Mammary epithelial cell (primary cell): ENCODE measurements at regions of chr4 and their contacts with region 1.

Region 1: GRCh38 chr4:47836641-47837093 is 1.2 kb downstream of the CORIN start:
- DNase-seq: peak; percentile 78
- H3K4me3 ChIP-seq: peak overlapping the region; percentile 48 to 58 (median 55)
- H3K27ac ChIP-seq: no peak overlapping the region
- H3K4me1 ChIP-seq: peaks cover 19% of the 10 kb centered on the region
- H3K27me3 ChIP-seq: no peaks in the 10 kb centered on the region
- CTCF ChIP-seq: peak; percentile 67 to 88

Region 2: GRCh38 chr4:47668810-47669408 is 167.8 kb before region 1 on chr4:
- CTCF ChIA-PET with region 1: interaction called, 6 read pairs
- dilution Hi-C with region 1: no loop called
- in situ Hi-C with region 1: no loop called
- intact Hi-C with region 1: loop called (anchors 1 kb)
- DNase-seq: peak; percentile 38
- H3K4me3 ChIP-seq: no peak overlapping the region
- H3K27ac ChIP-seq: no peak overlapping the region
- H3K4me1 ChIP-seq: no peaks in the 10 kb centered on the region
- H3K27me3 ChIP-seq: peaks cover under 1% of the 10 kb centered on the region
- CTCF ChIP-seq: peak; percentile 69 to 74

Region 3: DNA sequence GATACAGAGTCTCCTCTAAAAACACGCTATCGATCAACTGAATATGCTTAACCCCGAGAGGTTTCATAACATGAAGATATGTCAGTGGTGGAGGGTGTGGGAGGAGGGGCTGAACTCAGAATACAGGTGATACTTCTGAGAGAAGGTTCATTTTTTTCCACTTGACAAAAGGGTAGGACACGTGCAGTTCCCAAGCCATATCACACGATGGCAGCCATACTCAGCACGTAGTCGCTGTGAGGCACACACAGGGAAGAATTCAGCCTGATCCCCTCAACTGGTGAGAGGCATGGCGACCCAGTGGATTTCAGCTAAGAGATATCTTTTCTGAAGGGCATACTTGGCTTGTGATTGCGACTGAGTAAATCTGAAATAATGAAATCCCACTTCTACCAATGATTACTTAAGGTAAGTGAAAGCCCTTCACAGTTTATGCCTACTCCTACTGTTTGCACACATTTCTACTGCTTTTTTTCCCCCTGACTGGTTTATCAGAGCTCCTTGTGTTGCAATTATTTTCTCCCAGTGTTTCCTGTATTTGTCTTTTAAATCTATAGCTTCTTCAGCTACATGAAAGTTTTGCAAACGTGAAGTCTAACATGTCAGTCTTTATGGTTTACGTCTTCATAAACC is 131.9 kb before region 1 on chr4:
- CTCF ChIA-PET with region 1: interaction called, 4 read pairs
- dilution Hi-C with region 1: no loop called
- in situ Hi-C with region 1: loop called in 1 of 2 experiments (anchors 10 kb)
- intact Hi-C with region 1: loop called (anchors 1 kb)
- DNase-seq: no peak
- H3K4me3 ChIP-seq: no peak overlapping the region
- H3K27ac ChIP-seq: no peak overlapping the region
- H3K4me1 ChIP-seq: no peaks in the 10 kb centered on the region
- H3K27me3 ChIP-seq: peaks cover 2% of the 10 kb centered on the region
- CTCF ChIP-seq: peak in 1 of 2 donors; percentile 28